ENCODE measurements at regions of chr4 and their contacts with region 1.

Region 1: GRCh38 chr4:44118971-44119680 is 329.5 kb downstream of the KCTD8 start:
- DNase-seq: peak; percentile 81
- H3K4me3 Mint-ChIP-seq: peak overlapping the region; percentile 60
- H3K27ac Mint-ChIP-seq: peak overlapping the region; percentile 95
- H3K4me1 Mint-ChIP-seq: peaks cover 18% of the 10 kb centered on the region
- H3K27me3 Mint-ChIP-seq: no peaks in the 10 kb centered on the region
- CTCF ChIP-seq: no peak

Region 2: GRCh38 chr4:44145868-44146267 is 26.7 kb after region 1 on chr4:
- CTCF ChIA-PET with region 1: no interaction called
- POLR2A ChIA-PET with region 1: no interaction called
- intact Hi-C with region 1: loop called (anchors 1 kb)
- DNase-seq: peak; percentile 74
- H3K4me3 Mint-ChIP-seq: peak overlapping the region; percentile 0
- H3K27ac Mint-ChIP-seq: peak overlapping the region; percentile 78
- H3K4me1 Mint-ChIP-seq: peaks cover 33% of the 10 kb centered on the region
- H3K27me3 Mint-ChIP-seq: no peaks in the 10 kb centered on the region
- CTCF ChIP-seq: no peak

Region 3: DNA sequence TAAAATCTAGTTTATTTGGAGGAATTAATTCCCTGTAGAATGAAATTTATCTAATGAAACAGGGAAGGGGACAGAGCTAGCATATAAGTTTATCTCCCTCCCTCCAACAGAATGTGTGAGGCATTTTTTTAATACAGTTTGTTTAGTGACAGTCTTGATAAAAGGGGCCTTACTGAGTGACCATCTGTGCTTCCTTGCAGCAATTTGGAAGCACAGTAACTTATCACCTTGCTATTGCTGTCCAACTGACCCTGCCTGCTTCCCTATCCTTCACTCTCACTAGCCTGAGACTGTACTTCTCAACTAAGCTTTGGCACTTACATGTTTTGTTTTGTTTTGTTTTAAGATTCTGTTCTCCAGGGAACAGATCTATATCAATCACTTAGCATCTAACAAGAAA is 360.6 kb after region 1 on chr4:
- CTCF ChIA-PET with region 1: no interaction called
- POLR2A ChIA-PET with region 1: no interaction called
- intact Hi-C with region 1: no loop called
- DNase-seq: no peak
- H3K4me3 Mint-ChIP-seq: no peak overlapping the region
- H3K27ac Mint-ChIP-seq: no peak overlapping the region
- H3K4me1 Mint-ChIP-seq: no peaks in the 10 kb centered on the region
- H3K27me3 Mint-ChIP-seq: no peaks in the 10 kb centered on the region
- CTCF ChIP-seq: no peak

Measured in MCF 10A (cell line).